Head of caudate nucleus (tissue), 42 donors: ENCODE measurements at regions of chr13 and their contacts with region 1.

Region 1: DNA sequence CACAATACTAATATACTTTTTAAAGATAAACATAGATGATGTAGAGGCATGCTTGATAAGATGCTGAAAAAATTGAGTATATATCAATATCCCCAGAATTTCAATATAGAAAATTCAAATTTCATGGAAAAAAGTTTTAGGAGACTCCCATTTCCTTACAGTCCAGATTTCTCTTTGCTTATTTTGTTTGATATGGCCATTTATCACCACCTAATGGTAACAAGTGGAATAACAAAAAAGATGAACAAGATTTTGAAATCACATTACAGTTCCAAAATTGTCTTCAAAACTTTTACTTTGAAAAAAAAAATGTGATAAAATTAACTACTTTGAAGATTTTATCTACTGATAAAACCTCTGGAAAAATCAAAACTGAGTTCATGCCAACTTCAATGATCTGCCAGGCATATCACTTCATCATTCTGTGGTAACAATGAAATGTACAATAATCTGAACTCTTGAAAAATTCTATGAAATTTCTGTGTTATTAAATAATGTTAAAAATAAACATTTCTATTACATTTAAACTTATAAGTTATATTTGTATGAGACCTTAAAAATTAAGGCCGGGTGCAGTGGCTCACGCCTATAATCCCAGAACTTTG is 17.5 kb downstream of the MIPEP start:
- DNase-seq: no peak

Region 2: DNA sequence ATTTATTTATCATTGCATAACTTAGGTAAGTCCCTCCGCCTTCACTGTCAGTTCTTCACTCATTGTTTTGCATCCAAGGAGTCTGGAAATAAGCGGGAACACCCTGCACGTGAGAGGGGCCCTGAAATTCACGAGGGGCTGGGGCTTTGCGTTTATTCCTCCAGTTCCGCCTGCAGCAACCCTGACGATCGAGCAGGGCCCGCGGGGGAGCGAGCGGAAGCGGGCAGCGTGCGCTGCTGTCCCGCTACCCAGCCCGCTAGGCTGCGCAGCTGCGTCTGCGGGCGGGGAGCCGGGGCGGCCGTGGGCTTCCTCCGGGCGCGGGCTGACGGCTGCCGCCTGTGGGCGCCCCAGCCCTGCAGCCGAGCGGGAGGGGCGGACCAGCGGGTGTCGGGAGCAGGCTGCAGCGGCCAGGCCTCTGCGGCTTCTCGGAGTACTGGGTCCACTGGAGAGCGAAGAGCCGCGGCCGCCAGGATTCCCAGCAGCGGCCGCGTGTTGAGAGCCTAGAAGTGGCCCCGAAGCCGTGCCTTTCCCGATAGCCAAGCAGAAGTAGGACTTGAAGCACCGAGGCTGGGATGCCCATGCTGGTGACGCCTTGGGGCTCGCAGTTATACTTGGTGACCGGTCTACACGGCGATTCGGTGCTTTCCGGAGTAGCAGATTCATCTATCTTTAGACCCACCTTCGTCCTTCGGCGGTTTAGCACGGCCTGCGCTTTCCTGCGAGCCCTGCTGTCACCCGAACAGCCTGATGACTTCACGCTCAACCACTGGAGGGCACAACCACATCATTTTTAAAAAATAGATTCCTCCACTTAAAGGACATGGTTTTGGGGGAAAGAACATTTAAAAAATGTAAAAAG is 405.3 kb before region 1 on chr13:
- intact Hi-C with region 1: loop called (anchors 5 kb)
- DNase-seq: peak; percentile 59 to 90 (median 80)

Region 3: GRCh38 chr13:23715762-23716235 is 155.9 kb before region 1 on chr13:
- intact Hi-C with region 1: no loop called
- DNase-seq: peak in 6 of 42 donors; percentile 9 to 56 (median 34)

Region 4: GRCh38 chr13:24233351-24233901 is 361.7 kb after region 1 on chr13:
- intact Hi-C with region 1: no loop called
- DNase-seq: peak in 1 of 42 donors; percentile 37